CD4-positive, alpha-beta memory T cell (primary cell): ENCODE measurements at regions of chr1 and their contacts with region 1.

Region 1: DNA sequence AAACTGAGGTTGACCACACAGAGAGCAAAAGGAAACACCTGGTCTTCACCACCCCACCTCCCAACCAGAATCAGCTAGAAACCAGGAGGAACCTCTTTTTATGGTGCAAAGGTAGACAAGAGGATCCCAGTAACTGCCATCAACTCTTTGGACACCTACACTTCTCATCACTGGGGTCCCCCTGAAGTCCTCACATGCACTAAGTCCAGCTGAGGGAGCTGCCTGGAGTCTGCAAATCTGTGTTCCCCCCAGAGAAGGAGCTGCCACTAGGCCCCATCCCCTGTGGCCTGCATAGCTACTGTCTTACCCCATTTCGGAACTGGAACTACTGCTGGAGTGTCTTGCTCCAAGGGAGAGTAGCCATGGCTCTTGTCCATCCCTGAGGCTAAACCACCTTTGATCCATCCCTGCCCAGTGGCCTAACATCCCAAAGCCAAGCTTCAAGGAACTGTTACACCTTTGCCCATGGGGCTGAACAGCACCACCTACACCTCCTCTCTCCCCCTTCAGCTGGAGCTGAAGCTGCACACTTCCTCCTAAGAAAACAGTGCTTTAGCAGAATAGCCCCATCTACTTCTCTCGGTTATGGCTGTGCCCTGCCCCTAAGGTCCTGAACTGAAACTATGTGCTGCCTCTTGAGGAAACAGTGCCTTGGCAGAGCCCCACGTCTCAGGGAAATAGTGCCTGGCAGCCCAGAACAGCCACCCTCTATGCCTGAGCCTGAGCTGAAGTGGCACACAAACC is 85.4 kb upstream of the CD53 start:
- DNase-seq: peak; percentile 64 to 82 (median 75)
- H3K4me3 ChIP-seq: peak overlapping the region in 1 of 2 donors; percentile 19
- H3K4me3 Mint-ChIP-seq: peak overlapping the region; percentile 78 to 88 (median 82)
- H3K27ac ChIP-seq: peak overlapping the region; percentile 34
- H3K27ac Mint-ChIP-seq: peak overlapping the region; percentile 76 to 95 (median 92)
- H3K4me1 ChIP-seq: peaks cover 65% of the 10 kb centered on the region
- H3K4me1 Mint-ChIP-seq: peaks cover 55 to 70% (median 64%) of the 10 kb centered on the region in 4 donors
- H3K27me3 ChIP-seq: no peaks in the 10 kb centered on the region
- H3K27me3 Mint-ChIP-seq: peaks cover 0 to 1% of the 10 kb centered on the region in 2 donors

Region 2: DNA sequence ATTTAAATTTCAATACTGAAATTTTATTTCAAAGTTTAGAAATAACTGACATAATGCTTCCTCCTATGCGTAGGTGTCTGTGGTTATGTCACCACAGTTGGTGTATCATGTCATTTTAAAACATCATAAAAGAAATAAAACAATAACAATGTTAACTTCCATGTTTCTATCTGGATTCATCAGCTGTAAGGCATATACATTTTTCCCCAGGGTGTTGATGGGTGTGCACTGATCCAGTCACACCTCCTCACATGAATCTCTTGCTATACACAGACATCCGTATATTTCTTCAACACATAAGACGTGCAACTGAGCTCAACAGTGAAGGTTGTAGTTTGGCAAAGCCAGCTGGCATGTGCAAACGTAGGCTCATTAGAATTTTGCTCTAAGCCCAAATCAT is 119.0 kb before region 1 on chr1:
- CTCF ChIA-PET with region 1: interaction called, 8 read pairs
- POLR2A ChIA-PET with region 1: interaction called, 31 read pairs
- intact Hi-C with region 1: no loop called
- DNase-seq: peak; percentile 36 to 54 (median 49)
- H3K4me3 ChIP-seq: peak overlapping the region; percentile 52 to 68
- H3K4me3 Mint-ChIP-seq: peak overlapping the region; percentile 68 to 89 (median 84)
- H3K27ac ChIP-seq: peak overlapping the region; percentile 91
- H3K27ac Mint-ChIP-seq: peak overlapping the region in 6 of 7 donors; percentile 77 to 94 (median 89)
- H3K4me1 ChIP-seq: peaks cover 76% of the 10 kb centered on the region
- H3K4me1 Mint-ChIP-seq: peaks cover 19 to 40% (median 23%) of the 10 kb centered on the region in 4 donors
- H3K27me3 ChIP-seq: no peaks in the 10 kb centered on the region
- H3K27me3 Mint-ChIP-seq: no peaks in the 10 kb centered on the region

Region 3: GRCh38 chr1:110766025-110766647 is 21.4 kb before region 1 on chr1:
- CTCF ChIA-PET with region 1: interaction called, 89 read pairs
- POLR2A ChIA-PET with region 1: interaction called, 3 read pairs
- intact Hi-C with region 1: no loop called
- DNase-seq: peak; percentile 59 to 71 (median 68)
- H3K4me3 ChIP-seq: no peak overlapping the region
- H3K4me3 Mint-ChIP-seq: no peak overlapping the region
- H3K27ac ChIP-seq: no peak overlapping the region
- H3K27ac Mint-ChIP-seq: peak overlapping the region in 1 of 7 donors; percentile 80
- H3K4me1 ChIP-seq: peaks cover 4% of the 10 kb centered on the region
- H3K4me1 Mint-ChIP-seq: peaks cover 0 to 9% (median 2%) of the 10 kb centered on the region in 4 donors
- H3K27me3 ChIP-seq: no peaks in the 10 kb centered on the region
- H3K27me3 Mint-ChIP-seq: peaks cover 12% of the 10 kb centered on the region in 2 donors

Region 4: GRCh38 chr1:110829955-110830553 is 42.6 kb after region 1 on chr1:
- CTCF ChIA-PET with region 1: interaction called, 145 read pairs
- POLR2A ChIA-PET with region 1: interaction called, 29 read pairs
- intact Hi-C with region 1: loop called (anchors 1 kb)
- DNase-seq: peak; percentile 41 to 63 (median 57)
- H3K4me3 ChIP-seq: no peak overlapping the region
- H3K4me3 Mint-ChIP-seq: no peak overlapping the region
- H3K27ac ChIP-seq: no peak overlapping the region
- H3K27ac Mint-ChIP-seq: peak overlapping the region in 1 of 7 donors; percentile 42
- H3K4me1 ChIP-seq: peaks cover 7% of the 10 kb centered on the region
- H3K4me1 Mint-ChIP-seq: peaks cover 5 to 8% (median 7%) of the 10 kb centered on the region in 4 donors
- H3K27me3 ChIP-seq: no peaks in the 10 kb centered on the region
- H3K27me3 Mint-ChIP-seq: peaks cover 0 to 10% of the 10 kb centered on the region in 2 donors

Region 5: DNA sequence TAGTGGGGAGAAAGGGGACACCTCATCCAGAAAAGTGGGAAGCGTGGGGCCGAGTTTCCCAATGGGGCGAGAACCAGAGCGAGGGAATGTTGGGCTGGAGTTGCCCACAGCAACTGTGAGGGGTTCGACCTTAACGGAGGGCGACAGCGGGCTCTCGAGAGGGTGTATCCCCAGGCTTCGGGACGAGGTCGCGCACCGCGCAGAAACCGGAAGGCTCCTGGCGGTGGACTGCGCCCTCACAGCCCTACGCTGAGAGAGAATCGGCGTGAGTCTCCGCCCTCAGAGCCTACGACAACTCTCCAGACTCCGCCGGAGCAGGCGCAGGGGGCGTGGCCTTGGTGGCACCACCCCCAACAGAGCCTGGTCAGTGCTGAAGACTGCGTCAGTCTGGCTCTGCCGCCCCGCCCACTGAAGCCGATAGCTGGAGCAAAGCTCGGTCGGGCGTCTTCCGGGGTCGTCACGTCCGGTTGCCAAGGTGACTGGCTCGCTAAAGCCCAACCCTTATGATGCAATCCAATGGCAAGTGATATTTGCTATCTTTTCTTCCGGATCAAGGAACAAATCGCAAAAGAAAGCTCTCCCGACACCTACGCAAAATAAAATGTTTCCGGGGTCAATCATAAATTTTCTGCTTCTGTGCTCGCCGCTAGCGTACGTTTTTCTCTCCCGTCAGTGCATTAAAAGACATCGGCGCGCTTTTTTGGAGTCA is 176.3 kb after region 1 on chr1 and contains the start of gene LRIF1:
- CTCF ChIA-PET with region 1: interaction called, 6 read pairs
- POLR2A ChIA-PET with region 1: interaction called, 16 read pairs
- intact Hi-C with region 1: loop called (anchors 2 kb)
- DNase-seq: peak; percentile 98 to 100 (median 100)
- H3K4me3 ChIP-seq: peak within 1 kb of the TSS; percentile 90 to 95
- H3K4me3 Mint-ChIP-seq: peak within 1 kb of the TSS; percentile 81 to 96 (median 92)
- H3K27ac ChIP-seq: peak within 1 kb of the TSS; percentile 96
- H3K27ac Mint-ChIP-seq: peak within 1 kb of the TSS; percentile 93 to 100 (median 98)
- H3K4me1 ChIP-seq: peaks cover 31% of the 10 kb centered on the region
- H3K4me1 Mint-ChIP-seq: peaks cover 20 to 35% (median 27%) of the 10 kb centered on the region in 4 donors
- H3K27me3 ChIP-seq: peaks cover 3% of the 10 kb centered on the region
- H3K27me3 Mint-ChIP-seq: peaks cover 8 to 10% of the 10 kb centered on the region in 2 donors
- total RNA-seq, gene LRIF1: 27.0 to 28.2 TPM

Region 6: DNA sequence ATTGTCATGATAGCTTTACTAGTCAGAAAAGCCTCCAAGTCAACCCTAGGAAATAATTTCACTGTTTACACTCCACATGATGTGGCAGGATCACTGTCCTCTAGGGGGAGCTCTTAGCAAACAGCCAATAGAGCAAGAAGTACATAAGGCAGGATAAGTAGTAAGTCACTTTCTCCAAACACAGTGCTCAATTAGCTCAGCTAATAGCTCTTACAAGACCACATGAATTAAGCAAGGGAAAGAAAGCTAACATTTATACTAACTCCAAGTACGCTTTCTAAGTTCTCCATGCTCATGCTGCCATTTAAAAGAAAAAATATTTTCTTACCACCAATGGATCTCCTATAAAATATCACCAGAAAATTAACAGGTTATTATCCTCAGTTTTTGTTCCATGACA is 243.1 kb after region 1 on chr1:
- CTCF ChIA-PET with region 1: interaction called, 10 read pairs
- POLR2A ChIA-PET with region 1: interaction called, 3 read pairs
- intact Hi-C with region 1: loop called (anchors 1 kb)
- DNase-seq: peak; percentile 54 to 62 (median 59)
- H3K4me3 ChIP-seq: no peak overlapping the region
- H3K4me3 Mint-ChIP-seq: no peak overlapping the region
- H3K27ac ChIP-seq: no peak overlapping the region
- H3K27ac Mint-ChIP-seq: no peak overlapping the region
- H3K4me1 ChIP-seq: no peaks in the 10 kb centered on the region
- H3K4me1 Mint-ChIP-seq: no peaks in the 10 kb centered on the region
- H3K27me3 ChIP-seq: no peaks in the 10 kb centered on the region
- H3K27me3 Mint-ChIP-seq: peaks cover 5 to 12% of the 10 kb centered on the region in 2 donors